ENCODE measurements at regions of chr9 and their contacts with region 1.

Region 1: DNA sequence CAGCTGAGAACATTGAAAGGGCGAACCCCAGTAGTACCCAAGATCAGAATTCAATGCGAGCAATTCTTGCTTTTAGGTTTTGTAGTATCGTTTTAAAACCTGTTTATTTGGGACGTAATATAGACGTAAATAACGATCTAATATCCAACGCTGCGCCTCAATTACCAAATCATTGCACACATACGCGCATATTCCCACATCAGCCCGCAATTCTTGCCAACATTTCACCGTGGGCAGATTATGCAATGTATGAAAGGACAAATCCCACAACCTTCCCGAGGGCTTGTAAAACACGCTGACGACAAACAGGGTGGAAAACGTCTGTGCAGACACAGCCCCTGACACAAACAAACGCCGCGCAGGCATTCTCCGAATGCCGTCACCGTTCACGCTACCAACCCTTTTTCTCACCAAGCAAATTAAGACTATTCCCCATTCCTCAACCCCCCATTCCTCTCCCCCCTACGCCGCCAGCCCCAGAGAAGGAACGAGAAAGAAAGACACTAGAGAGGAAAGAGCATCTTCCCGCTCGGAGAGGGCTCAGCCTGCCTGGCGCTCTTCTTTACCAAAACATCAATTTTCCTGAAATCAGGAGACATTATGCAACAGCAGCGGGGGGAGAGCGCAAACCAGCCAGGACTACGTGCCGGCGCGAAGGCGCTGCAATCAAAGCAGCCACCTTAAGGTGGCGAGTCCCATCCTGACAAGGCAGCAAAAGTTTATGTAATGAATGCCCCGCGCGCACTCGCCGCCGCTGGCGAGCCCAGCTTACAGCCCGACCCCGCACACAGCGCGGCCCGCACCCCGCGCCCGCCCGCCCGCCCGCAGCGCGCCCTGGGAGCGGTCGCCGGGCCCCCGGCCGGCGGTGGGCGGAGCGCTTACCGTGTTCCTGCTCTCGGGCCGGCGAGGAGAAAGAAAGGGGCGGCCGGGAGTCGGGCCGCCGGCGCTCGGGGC is 597 bp downstream of the NFIL3 start:
- DNase-seq: peak; percentile 40 to 88
- H3K4me3 ChIP-seq: peak overlapping the region; percentile 83 to 86
- H3K27ac ChIP-seq: peak overlapping the region; percentile 94 to 95
- H3K4me1 ChIP-seq: peaks cover 0 to 22% of the 10 kb centered on the region in 2 donors
- H3K27me3 ChIP-seq: no peaks in the 10 kb centered on the region
- CTCF ChIP-seq: peak in 1 of 3 experiments; percentile 13

Region 2: DNA sequence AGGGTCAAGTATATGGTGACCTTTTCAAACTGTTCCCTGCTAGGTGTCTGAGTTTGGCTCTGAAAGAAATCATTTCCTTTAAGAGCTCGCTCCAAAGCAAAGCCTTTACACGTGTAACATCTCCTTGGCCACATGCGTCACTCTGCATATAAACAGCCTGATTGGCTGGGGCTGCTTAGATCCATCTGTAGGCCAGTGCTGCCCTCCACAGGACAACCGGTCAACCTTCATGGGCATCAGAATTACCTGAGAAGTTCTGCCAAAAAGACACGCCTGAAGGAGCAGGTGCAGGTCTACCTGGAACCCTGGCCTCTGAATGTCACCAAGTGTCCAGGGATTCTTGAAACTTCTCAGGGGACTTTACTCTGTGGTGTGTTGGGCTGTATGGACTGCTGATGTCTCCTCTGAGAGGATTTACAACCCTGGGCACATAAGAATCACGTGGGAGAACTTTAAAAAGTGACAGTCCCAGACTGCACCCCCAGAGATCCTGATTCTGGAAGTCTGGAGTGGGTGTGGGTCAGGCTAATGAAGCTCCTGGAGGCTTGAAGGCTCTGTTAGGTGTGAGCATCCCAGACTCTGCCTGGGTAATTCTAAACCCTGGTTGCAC is 1320.6 kb before region 1 on chr9:
- intact Hi-C with region 1: loop called (anchors 10 kb)
- DNase-seq: peak; percentile 48 to 87
- H3K4me3 ChIP-seq: no peak overlapping the region
- H3K27ac ChIP-seq: no peak overlapping the region
- H3K4me1 ChIP-seq: peaks cover 0 to 3% of the 10 kb centered on the region in 2 donors
- H3K27me3 ChIP-seq: no peaks in the 10 kb centered on the region
- CTCF ChIP-seq: peak; percentile 79 to 86 (median 83)

Region 3: GRCh38 chr9:90964101-90965020 is 458.7 kb before region 1 on chr9:
- intact Hi-C with region 1: loop called (anchors 1 kb)
- DNase-seq: peak in 1 of 2 donors; percentile 83
- H3K4me3 ChIP-seq: peak overlapping the region; percentile 20 to 58
- H3K27ac ChIP-seq: peak overlapping the region; percentile 82 to 93
- H3K4me1 ChIP-seq: peaks cover 6 to 17% of the 10 kb centered on the region in 2 donors
- H3K27me3 ChIP-seq: no peaks in the 10 kb centered on the region
- CTCF ChIP-seq: peak; percentile 32 to 42 (median 33)

Region 4: GRCh38 chr9:91117959-91118703 is 304.9 kb before region 1 on chr9:
- intact Hi-C with region 1: loop called (anchors 2 kb)
- DNase-seq: peak; percentile 58 to 93
- H3K4me3 ChIP-seq: peak overlapping the region; percentile 37 to 57
- H3K27ac ChIP-seq: peak overlapping the region; percentile 83 to 86
- H3K4me1 ChIP-seq: peaks cover 12 to 29% of the 10 kb centered on the region in 2 donors
- H3K27me3 ChIP-seq: no peaks in the 10 kb centered on the region
- CTCF ChIP-seq: no peak

Region 5: DNA sequence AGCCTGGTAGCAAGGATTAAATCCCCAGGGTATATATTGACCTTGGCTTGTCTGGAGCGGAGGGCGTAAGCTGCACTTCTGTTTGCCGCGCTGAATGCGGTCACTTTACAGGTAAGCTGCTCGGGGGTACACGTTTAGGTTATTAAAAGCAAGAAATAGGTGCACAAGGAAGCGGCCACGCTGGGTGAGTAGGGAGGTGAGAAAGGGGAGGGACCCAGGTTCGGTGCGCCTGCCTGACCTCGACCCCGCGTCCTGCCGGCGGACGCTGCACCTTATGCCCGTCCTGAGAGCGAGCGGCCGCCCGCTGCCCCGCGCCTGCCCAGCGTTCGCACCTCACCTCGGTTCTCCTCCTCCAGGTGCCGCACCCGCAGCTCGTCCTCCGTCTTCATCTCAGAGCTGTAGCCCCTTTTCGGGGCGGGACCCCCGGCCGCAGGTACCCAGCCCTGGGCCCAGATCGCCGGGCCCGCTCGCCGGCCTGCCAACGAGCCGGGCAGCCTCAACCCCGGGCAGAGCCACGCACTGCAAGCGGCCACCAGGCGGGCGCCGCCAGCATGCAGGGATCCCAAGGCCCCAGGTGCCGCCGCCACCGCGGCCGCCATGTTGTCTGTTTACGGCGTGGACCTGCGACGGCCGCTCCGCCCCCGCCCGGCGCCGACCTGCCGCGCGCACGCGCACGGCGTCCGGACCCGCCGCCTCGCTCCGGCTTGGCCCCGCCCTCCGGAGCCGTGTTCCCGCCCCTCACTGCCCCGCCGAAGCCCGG is 61.6 kb before region 1 on chr9 and contains the start of gene AUH:
- intact Hi-C with region 1: loop called (anchors 2 kb)
- DNase-seq: peak; percentile 38 to 89
- H3K4me3 ChIP-seq: peak within 1 kb of the TSS; percentile 89 to 96
- H3K27ac ChIP-seq: peak within 1 kb of the TSS; percentile 86 to 88
- H3K4me1 ChIP-seq: peaks cover 0 to 7% of the 10 kb centered on the region in 2 donors
- H3K27me3 ChIP-seq: no peaks in the 10 kb centered on the region
- CTCF ChIP-seq: no peak
- total RNA-seq, gene AUH: 46.2 TPM

Region 6: GRCh38 chr9:91775011-91775707 is 352.1 kb after region 1 on chr9:
- intact Hi-C with region 1: no loop called
- DNase-seq: no peak
- H3K4me3 ChIP-seq: no peak overlapping the region
- H3K27ac ChIP-seq: no peak overlapping the region
- H3K4me1 ChIP-seq: no peaks in the 10 kb centered on the region
- H3K27me3 ChIP-seq: no peaks in the 10 kb centered on the region
- CTCF ChIP-seq: peak; percentile 32 to 67 (median 54)